Transverse colon (tissue), 4 donors: ENCODE measurements at regions of chr19 and their contacts with region 1.

Region 1: DNA sequence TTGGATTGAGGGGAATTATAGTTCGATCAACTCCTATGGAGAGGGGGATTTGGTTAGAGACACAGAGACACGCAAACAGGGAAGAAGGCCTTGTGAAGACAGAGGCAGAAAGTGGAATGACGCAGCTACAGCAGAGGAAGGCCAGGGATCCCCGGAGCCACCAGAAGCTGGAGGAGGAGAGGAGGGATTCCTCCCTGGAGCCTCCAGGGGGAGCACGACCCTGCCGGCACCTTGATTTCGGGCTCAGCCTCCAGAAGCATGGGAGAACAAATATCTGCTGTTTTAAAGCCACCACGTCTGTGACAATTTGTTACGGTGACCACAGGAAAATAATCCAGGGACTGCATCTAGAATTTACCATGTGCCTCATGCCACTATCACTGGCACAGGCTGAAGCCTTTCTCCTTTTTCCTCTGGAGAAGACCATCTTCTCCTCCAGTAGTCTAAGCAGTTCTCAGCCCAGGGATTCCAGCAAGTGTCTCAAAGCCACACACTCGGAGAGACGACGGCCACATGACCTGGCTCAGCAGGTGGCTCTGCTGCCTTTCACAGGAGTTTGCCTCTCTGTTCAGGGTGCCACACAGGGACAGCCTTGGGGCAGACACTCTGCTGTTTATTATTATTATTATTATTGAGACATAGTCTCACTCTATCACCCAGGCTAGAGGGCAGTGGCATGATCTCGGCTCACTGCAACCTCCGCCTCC is 39.9 kb upstream of the CCNE1 start:
- DNase-seq: peak; percentile 48
- H3K4me3 ChIP-seq: no peak overlapping the region
- H3K27ac ChIP-seq: no peak overlapping the region
- H3K4me1 ChIP-seq: no peaks in the 10 kb centered on the region
- H3K27me3 ChIP-seq: no peaks in the 10 kb centered on the region
- CTCF ChIP-seq: peak; percentile 60 to 68 (median 61)
- EP300 ChIP-seq: no peak
- POLR2A ChIP-seq: no peak

Region 2: DNA sequence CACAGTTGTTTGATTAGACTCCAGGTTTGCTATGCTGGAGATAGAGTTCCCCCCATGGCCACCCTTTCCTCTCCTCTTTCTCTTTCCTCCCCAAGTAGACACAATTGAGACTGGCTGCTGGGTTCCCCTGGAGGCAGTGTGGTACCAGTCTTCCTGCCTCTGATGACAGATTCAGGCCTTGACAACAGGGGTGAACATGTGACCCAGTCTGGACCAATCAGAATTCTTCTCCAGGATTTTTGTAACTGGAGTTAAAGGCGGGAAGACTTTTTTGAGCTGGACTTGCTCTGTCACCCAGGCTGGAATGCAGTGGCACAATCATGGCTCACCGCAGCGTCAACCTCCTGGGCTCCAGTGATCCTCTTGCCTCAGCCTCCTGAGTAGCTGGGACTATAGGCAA is 88.6 kb after region 1 on chr19:
- in situ Hi-C with region 1: loop called in 2 of 4 experiments (anchors 10 to 25 kb)
- intact Hi-C with region 1: no loop called
- DNase-seq: no peak
- H3K4me3 ChIP-seq: no peak overlapping the region
- H3K27ac ChIP-seq: no peak overlapping the region
- H3K4me1 ChIP-seq: no peaks in the 10 kb centered on the region
- H3K27me3 ChIP-seq: peaks cover 26% of the 10 kb centered on the region
- CTCF ChIP-seq: no peak
- EP300 ChIP-seq: no peak
- POLR2A ChIP-seq: no peak

Region 3: DNA sequence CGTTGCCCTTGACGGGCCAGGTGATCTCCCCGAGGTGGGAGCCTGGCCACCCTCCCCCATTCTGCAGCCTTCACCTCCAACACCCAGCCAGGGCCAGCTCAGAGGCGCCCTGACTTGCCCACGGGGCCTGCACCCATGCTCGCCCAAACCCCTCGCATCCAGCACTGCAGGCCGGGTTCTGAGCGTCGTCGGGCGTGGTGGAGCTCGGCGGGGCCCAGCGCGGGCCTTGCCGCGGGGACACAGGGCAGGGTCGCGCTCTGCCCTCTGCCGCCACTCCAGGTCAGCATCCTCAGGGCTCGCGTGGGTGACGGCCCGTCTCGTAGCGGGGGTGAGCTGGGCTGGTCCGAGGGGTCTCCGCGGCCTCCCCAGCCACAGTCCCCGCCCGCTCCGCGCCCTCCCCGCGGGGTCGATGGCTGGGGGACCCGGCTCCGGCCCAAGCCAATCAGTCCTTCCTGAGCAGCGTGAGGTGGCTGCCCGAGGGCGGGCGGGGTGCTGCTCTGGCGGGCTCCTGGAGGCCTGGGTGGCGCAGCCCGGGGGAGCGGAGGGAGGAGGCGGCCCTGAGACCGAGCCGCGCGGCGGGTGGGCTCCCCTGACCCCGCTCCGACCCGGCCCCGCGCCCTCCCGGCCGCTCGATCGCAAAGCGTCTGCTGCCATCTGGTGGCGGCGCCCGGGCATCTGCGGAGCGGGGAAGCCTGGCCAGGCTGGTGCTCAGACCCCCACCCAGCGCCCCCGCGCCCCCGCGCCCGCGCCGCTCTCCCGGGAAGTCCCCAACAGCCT is 101.4 kb after region 1 on chr19:
- in situ Hi-C with region 1: loop called in 3 of 4 experiments (anchors 10 to 25 kb)
- intact Hi-C with region 1: no loop called
- DNase-seq: peak; percentile 49
- H3K4me3 ChIP-seq: peak overlapping the region; percentile 18 to 48 (median 31)
- H3K27ac ChIP-seq: no peak overlapping the region
- H3K4me1 ChIP-seq: peaks cover 7 to 15% (median 11%) of the 10 kb centered on the region in 4 donors
- H3K27me3 ChIP-seq: peaks cover 32% of the 10 kb centered on the region
- CTCF ChIP-seq: peak; percentile 40 to 88 (median 81)
- EP300 ChIP-seq: no peak
- POLR2A ChIP-seq: no peak

Region 4: DNA sequence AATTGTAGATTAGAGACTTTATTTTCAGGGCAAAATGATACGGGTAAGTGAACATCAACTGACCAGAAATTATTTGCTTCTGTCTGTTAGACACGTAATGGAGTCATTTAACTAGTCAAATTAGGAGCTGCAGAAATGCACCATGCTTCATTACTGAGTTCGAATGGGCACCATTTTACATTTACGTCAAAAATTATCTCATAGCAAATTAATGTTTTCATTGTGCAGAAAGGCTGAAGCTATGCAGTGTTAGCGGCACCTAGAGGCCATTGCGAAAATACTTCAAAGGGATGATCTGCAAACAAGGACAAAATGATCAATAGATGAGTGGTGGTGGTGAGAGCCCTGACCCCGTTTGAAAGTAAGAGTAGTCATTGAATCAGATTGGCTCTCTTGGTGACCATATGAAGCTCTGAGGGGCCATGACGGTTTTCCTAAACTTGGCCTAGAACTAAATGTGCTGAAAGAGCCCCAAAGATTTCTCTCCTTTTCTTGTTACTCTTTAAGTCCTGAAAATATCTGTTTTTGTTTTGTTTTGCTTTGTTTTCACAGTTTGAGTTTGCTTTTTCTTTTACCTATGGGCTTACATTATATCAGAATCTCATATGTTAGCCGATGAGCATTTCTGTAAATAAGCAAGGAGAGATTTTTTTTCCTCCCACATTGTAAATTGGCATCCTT is 878.2 kb after region 1 on chr19:
- in situ Hi-C with region 1: loop called in 2 of 4 experiments (anchors 25 kb)
- intact Hi-C with region 1: no loop called
- DNase-seq: no peak
- H3K4me3 ChIP-seq: no peak overlapping the region
- H3K27ac ChIP-seq: no peak overlapping the region
- H3K4me1 ChIP-seq: no peaks in the 10 kb centered on the region
- H3K27me3 ChIP-seq: peaks cover 24% of the 10 kb centered on the region
- CTCF ChIP-seq: peak; percentile 50 to 67 (median 65)
- EP300 ChIP-seq: no peak
- POLR2A ChIP-seq: no peak